Mammary epithelial cell (primary cell): ENCODE measurements at regions of chr17 and their contacts with region 1.

Region 1: GRCh38 chr17:69523244-69523861 is 108.9 kb downstream of the MAP2K6 start:
- DNase-seq: peak; percentile 44
- H3K4me3 ChIP-seq: no peak overlapping the region
- H3K27ac ChIP-seq: no peak overlapping the region
- H3K4me1 ChIP-seq: no peaks in the 10 kb centered on the region
- H3K27me3 ChIP-seq: no peaks in the 10 kb centered on the region
- CTCF ChIP-seq: peak; percentile 72 to 85

Region 2: GRCh38 chr17:69246726-69247375 is 276.5 kb before region 1 on chr17:
- CTCF ChIA-PET with region 1: no interaction called
- dilution Hi-C with region 1: no loop called
- in situ Hi-C with region 1: no loop called
- intact Hi-C with region 1: loop called (anchors 5 kb)
- DNase-seq: peak; percentile 24
- H3K4me3 ChIP-seq: no peak overlapping the region
- H3K27ac ChIP-seq: no peak overlapping the region
- H3K4me1 ChIP-seq: no peaks in the 10 kb centered on the region
- H3K27me3 ChIP-seq: no peaks in the 10 kb centered on the region
- CTCF ChIP-seq: peak; percentile 57 to 58

Region 3: DNA sequence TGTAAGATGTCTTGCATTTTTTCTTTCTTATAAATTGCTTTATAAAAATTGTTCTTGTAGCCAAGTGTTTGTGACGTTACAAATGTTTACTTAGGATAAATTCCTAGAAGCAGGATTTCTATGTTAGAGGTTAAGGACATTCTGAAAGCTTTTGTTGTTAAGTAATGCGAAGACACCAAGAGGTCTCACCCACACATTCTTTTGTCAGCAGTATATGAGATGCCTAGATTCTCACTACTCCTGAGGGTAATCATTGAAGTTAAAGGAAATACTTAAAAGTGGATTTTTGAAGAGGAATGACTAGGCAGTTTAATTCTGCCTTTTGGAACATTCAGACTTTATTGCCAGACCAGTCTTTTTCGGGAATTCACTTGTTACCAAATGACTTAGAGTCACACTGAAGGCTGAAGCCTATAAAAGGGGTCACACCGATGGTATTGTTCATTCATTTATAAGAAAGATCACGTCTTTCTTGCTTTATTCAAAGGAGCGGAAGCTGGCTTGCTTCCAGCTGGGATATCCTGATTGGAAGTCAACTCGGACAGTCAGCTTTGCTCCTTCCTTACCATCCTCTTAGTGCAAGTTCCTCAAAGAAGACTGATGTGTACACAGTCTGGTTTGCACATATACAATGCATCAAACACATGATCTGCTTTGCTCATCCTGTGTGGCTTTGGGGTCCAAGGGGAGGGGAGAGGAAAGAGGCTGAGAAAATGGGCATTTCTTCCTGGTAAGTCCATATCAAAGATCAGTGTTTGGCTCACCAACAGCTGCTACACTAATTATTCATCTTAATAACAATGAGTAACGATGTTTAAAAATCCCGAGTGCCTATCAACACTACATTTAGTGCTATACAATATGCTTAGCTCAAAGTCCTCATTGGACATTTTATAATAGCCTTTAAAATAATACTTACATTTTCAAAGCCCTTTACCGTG is 51.2 kb after region 1 on chr17:
- CTCF ChIA-PET with region 1: no interaction called
- dilution Hi-C with region 1: no loop called
- in situ Hi-C with region 1: no loop called
- intact Hi-C with region 1: loop called (anchors 1 kb)
- DNase-seq: no peak
- H3K4me3 ChIP-seq: no peak overlapping the region
- H3K27ac ChIP-seq: no peak overlapping the region
- H3K4me1 ChIP-seq: no peaks in the 10 kb centered on the region
- H3K27me3 ChIP-seq: no peaks in the 10 kb centered on the region
- CTCF ChIP-seq: no peak

Region 4: DNA sequence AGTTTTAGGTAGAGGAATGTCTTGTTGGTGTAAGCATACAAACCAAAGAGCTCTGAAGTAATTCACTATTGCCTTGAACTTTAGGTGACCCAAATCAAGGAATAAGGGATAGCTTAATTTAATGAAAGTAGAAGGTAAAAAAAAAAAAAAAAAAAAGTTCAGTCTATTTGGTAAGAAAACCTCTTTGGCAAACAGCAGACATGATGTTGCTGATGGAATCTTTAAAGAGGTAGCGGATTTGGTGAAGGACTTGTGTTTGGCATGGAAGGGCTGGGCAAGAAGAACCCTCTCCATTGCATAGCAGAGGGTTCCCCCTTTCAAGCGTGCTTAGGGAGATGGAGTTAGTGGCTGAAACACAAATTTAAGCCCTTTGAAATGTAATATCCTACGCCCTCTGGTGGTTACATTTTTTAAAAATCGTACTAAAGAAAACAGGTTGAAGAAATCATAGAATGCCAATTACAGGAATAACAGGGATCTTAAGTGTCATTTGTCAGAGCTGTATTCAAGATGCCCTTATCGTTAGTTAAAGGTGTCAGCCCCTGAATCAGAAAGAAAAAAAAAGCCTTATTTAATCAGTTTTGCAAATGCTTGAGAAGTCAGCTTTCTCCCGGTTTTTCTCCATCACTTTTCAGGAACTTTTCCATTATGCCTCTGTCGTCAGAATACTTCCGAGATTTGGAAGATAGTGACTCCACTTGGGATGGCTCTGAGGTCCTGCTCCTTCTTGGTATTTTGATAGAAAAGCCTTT is 1029.1 kb after region 1 on chr17:
- CTCF ChIA-PET with region 1: no interaction called
- dilution Hi-C with region 1: no loop called
- in situ Hi-C with region 1: no loop called
- intact Hi-C with region 1: loop called (anchors 10 kb)
- DNase-seq: peak; percentile 18
- H3K4me3 ChIP-seq: no peak overlapping the region
- H3K27ac ChIP-seq: no peak overlapping the region
- H3K4me1 ChIP-seq: no peaks in the 10 kb centered on the region
- H3K27me3 ChIP-seq: no peaks in the 10 kb centered on the region
- CTCF ChIP-seq: peak; percentile 18 to 52